Activated CD8-positive, alpha-beta T cell treated with anti-CD3 and anti-CD28 coated beads for 36 hours (primary cell): ENCODE measurements at regions of chr1 and their contacts with region 1.

Region 1: GRCh38 chr1:214328770-214329469 is 48.0 kb downstream of the SMYD2 start:
- DNase-seq: peak; percentile 87
- ATAC-seq: peak; percentile 95
- H3K4me3 Mint-ChIP-seq: no peak overlapping the region
- H3K27ac Mint-ChIP-seq: no peak overlapping the region
- H3K4me1 Mint-ChIP-seq: peaks cover 2% of the 10 kb centered on the region
- H3K27me3 Mint-ChIP-seq: no peaks in the 10 kb centered on the region
- CTCF ChIP-seq: peak; percentile 85

Region 2: GRCh38 chr1:214228976-214229375 is 99.9 kb before region 1 on chr1:
- CTCF ChIA-PET with region 1: interaction called, 12 read pairs
- POLR2A ChIA-PET with region 1: no interaction called
- intact Hi-C with region 1: no loop called
- DNase-seq: no peak
- ATAC-seq: no peak
- H3K4me3 Mint-ChIP-seq: no peak overlapping the region
- H3K27ac Mint-ChIP-seq: no peak overlapping the region
- H3K4me1 Mint-ChIP-seq: no peaks in the 10 kb centered on the region
- H3K27me3 Mint-ChIP-seq: peaks cover 8% of the 10 kb centered on the region
- CTCF ChIP-seq: no peak

Region 3: DNA sequence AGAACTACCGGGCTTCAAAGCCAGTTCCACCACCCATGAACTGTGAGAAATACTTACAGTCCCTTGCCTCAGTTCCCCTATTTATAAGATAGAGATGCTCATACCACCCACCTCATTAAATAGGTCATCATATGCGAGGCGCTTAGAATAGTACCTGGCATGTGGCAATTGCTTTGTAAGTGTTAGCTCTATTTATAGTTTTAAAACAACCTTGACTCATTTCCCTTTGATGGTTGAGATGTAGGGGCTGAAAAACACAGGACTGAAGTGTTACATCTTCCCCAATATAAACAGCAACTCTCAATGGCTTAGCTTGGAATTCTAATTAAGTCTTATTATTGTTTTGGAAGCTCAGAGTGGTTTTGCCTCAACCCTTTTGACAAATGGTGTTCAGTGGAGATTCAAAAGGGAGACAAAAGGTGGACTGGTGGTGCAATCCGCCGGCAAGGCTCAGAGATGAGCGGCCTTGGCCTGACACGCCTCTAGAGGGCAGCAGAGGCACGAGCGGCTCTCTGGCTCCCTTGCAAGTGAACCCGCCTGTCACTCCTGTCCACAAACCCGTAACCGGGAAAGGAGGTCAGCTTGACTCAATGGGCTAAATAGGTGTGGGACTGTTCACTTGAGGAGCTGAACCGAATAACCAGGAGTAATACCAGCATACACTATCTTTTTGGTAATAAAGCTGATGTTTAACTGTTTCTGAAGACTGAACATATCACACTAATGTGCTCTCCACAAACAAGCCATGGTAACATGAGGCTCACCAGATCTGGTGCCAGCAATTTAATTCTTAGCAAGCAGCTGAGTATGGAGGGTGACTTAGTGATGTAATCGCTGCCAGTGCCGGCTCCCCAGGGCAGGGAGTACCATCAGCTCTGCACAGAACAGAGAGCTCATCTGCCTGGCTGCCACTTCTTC is 67.5 kb before region 1 on chr1:
- CTCF ChIA-PET with region 1: interaction called, 505 read pairs
- POLR2A ChIA-PET with region 1: interaction called, 5 read pairs
- intact Hi-C with region 1: loop called (anchors 1 kb)
- DNase-seq: peak; percentile 86
- ATAC-seq: peak; percentile 90
- H3K4me3 Mint-ChIP-seq: no peak overlapping the region
- H3K27ac Mint-ChIP-seq: no peak overlapping the region
- H3K4me1 Mint-ChIP-seq: peaks cover 10% of the 10 kb centered on the region
- H3K27me3 Mint-ChIP-seq: peaks cover 45% of the 10 kb centered on the region
- CTCF ChIP-seq: peak; percentile 87

Region 4: GRCh38 chr1:214292322-214292721 is 36.6 kb before region 1 on chr1:
- CTCF ChIA-PET with region 1: interaction called, 10 read pairs
- POLR2A ChIA-PET with region 1: interaction called, 3 read pairs
- intact Hi-C with region 1: no loop called
- DNase-seq: no peak
- ATAC-seq: no peak
- H3K4me3 Mint-ChIP-seq: no peak overlapping the region
- H3K27ac Mint-ChIP-seq: no peak overlapping the region
- H3K4me1 Mint-ChIP-seq: peaks cover 44% of the 10 kb centered on the region
- H3K27me3 Mint-ChIP-seq: no peaks in the 10 kb centered on the region
- CTCF ChIP-seq: no peak

Region 5: DNA sequence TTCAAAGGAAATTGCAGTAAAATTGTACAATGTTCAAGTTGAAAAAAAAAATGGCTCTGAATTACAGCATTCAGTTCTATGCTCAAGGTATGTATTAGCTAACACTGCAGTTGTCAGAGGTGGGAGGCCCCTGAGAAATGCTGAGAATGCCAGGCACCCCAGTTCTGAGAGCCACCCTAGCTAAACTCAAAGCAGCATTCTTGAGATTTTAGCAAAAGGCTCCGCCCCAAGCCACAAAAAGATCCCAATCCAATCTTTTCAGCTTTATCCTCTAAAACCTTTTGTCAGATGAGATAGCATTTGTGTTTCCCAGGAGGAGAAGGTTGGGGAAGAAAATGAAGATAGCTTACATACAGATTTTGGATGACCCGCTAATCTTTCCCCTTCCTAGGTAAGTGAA is 20.9 kb after region 1 on chr1:
- CTCF ChIA-PET with region 1: interaction called, 18 read pairs
- POLR2A ChIA-PET with region 1: no interaction called
- intact Hi-C with region 1: no loop called
- DNase-seq: no peak
- ATAC-seq: no peak
- H3K4me3 Mint-ChIP-seq: no peak overlapping the region
- H3K27ac Mint-ChIP-seq: no peak overlapping the region
- H3K4me1 Mint-ChIP-seq: no peaks in the 10 kb centered on the region
- H3K27me3 Mint-ChIP-seq: peaks cover 2% of the 10 kb centered on the region
- CTCF ChIP-seq: no peak